AG04449 (cell line): ENCODE measurements at regions of chr11 and their contacts with region 1.

Region 1: GRCh38 chr11:118198370-118198769 is 21.9 kb upstream of the SCN2B start:
- DNase-seq: no peak
- H3K4me3 ChIP-seq: no peak overlapping the region; the same call in 1 of the 2 replicates
- CTCF ChIP-seq: peak; percentile 90

Region 2: DNA sequence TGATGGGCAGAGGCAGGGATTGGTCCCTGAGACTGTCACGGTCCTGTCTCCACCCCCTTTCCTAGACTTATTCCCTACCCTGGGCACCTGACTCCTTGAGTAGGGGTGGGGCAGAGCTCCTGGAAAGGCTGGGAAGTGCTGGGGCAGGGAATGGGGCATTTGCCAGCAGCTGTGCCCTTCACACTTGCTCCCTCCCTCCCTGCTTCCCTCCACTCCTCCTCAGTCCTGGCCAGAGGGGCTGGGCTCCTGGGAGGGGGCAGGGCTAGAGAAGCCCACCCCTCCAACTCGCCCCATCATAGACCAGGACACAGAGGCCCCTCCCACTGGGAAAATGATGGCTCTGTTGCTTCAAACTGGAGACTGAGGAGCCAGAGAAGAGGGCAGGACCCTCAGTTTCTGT is 33.5 kb before region 1 on chr11:
- CTCF ChIA-PET with region 1: no interaction called
- POLR2A ChIA-PET with region 1: no interaction called
- DNase-seq: no peak
- H3K4me3 ChIP-seq: no peak overlapping the region
- CTCF ChIP-seq: no peak

Region 3: DNA sequence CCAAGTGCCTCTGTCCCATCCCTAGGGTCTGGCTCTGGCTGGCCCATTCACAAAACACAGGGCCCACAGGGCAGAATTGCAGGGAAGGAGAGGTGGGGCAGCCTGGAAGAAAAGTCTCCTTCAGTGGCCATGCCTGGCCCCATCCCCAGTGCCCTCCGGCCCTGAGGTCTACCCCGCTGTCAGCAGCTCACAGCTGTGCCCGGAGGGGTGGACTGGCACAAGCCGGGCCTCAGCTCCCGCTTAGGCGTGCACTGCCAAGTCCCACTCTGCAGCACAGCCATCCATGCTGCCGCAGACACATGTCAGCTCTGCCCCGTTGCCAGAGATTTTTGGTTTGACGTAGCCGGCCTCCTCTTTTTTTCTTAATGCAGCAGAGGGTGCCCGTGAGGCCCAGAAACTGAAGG is 18.1 kb before region 1 on chr11:
- CTCF ChIA-PET with region 1: interaction called, 17 read pairs
- POLR2A ChIA-PET with region 1: no interaction called
- DNase-seq: no peak
- H3K4me3 ChIP-seq: no peak overlapping the region
- CTCF ChIP-seq: no peak

Region 4: GRCh38 chr11:118216621-118217481 is 18.5 kb after region 1 on chr11:
- CTCF ChIA-PET with region 1: interaction called, 46 read pairs
- POLR2A ChIA-PET with region 1: no interaction called
- DNase-seq: no peak
- H3K4me3 ChIP-seq: no peak overlapping the region
- CTCF ChIP-seq: no peak

Region 5: GRCh38 chr11:118290923-118291322 is 92.6 kb after region 1 on chr11:
- CTCF ChIA-PET with region 1: interaction called, 11 read pairs
- POLR2A ChIA-PET with region 1: no interaction called
- DNase-seq: no peak
- H3K4me3 ChIP-seq: no peak overlapping the region
- CTCF ChIP-seq: no peak

Region 6: GRCh38 chr11:118353084-118353710 is 154.8 kb after region 1 on chr11:
- CTCF ChIA-PET with region 1: interaction called, 94 read pairs
- POLR2A ChIA-PET with region 1: no interaction called
- DNase-seq: no peak
- H3K4me3 ChIP-seq: no peak overlapping the region
- CTCF ChIP-seq: no peak